GM23248 (cell line): ENCODE measurements at regions of chr1 and their contacts with region 1.

Region 1: DNA sequence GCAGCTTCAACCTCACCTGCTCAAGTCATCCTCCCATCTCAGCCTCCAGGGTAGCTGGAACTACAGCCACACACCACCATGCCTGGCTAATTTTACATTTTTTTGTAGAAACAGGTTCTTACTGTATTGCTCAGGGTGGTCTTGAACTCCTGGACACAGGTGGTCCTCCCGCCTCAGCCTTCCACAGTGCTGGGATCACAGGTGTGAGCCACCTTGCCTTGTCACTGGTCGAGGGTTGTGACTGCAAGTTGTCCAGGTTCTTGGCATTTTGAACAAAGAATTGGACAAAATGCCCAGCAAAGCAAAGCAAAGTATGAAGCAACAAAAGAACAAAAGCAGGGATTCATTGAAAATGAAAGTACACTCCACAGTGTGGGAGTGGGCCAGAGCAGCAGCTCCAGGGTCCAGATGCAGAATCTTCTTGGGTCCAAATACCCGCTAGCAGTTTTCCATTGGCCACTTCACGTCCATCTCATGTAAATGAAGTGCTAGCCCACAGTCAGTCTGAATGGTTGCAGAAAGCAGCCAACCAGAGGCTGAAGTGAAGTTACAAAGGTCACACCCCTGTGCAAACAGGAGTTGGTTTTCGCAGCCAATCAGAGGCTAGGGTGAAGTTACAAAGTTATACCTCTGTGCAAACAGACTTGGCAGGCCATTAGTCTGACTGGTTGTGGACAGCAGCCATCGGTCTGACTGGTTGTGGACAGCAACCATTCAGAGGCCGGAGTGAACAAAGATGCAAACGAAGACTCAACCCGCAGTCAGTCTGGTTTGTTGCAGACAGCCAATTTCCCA is 109.5 kb upstream of the KIF26B start:
- DNase-seq: peak; percentile 8
- H3K4me3 ChIP-seq: no peak overlapping the region
- H3K27ac ChIP-seq: no peak overlapping the region
- H3K4me1 ChIP-seq: 0 out of 2 replicates have a peak, but pooled peaks cover 3% of the 10 kb centered on the region
- H3K27me3 ChIP-seq: no peaks in the 10 kb centered on the region

Region 2: DNA sequence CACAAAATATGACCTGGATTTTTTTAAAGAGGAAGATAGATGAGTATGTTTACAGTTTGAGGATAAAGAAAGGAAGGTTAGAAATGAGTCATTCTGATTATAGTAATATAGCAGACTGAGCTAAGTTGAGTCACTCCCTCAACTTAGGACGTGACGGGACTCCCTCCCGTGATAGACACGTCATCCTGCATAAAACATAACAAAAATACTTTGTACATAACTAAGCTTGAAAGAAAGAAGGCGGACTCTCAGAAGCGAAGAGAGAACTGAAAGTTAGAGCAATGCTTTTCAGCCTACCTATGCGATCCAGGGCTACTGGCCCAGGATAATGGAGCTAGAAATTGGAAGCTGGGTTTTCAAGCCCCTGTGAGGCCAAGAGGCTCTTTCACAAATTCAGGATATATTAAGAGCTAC is 445.3 kb before region 1 on chr1:
- in situ Hi-C with region 1: loop called (anchors 25 kb)
- DNase-seq: peak; percentile 98
- H3K4me3 ChIP-seq: peak overlapping the region; percentile 71
- H3K27ac ChIP-seq: peak overlapping the region; percentile 81
- H3K4me1 ChIP-seq: peaks cover 8% of the 10 kb centered on the region
- H3K27me3 ChIP-seq: no peaks in the 10 kb centered on the region

Region 3: GRCh38 chr1:244864253-244865027 is 180.8 kb before region 1 on chr1 and contains the start of gene HNRNPU:
- in situ Hi-C with region 1: loop called (anchors 25 kb)
- DNase-seq: peak; percentile 100
- H3K4me3 ChIP-seq: peak within 1 kb of the TSS; percentile 97
- H3K27ac ChIP-seq: peak within 1 kb of the TSS; percentile 99
- H3K4me1 ChIP-seq: peaks cover 36% of the 10 kb centered on the region
- H3K27me3 ChIP-seq: no peaks in the 10 kb centered on the region
- total RNA-seq, gene HNRNPU: 226 and 227 TPM in 2 replicates